ENCODE measurements at regions of chr15 and their contacts with region 1.

Region 1: GRCh38 chr15:68817304-68818065 is 3.2 kb downstream of the ANP32A start:
- DNase-seq: peak; percentile 76
- H3K4me3 ChIP-seq: peak overlapping the region; percentile 89 to 92
- H3K27ac ChIP-seq: peak overlapping the region; percentile 87 to 98
- H3K4me1 ChIP-seq: peaks cover 10 to 36% of the 10 kb centered on the region in 2 experiments; a peak in 3 of 4 replicates
- H3K27me3 ChIP-seq: no peaks in the 10 kb centered on the region
- CTCF ChIP-seq: no peak
- EP300 ChIP-seq: no peak
- RAD21 ChIP-seq: no peak

Region 2: GRCh38 chr15:68806220-68807060 is 11.0 kb before region 1 on chr15:
- CTCF ChIA-PET with region 1: interaction called, 12 read pairs
- POLR2A ChIA-PET with region 1: interaction called, 4 read pairs
- DNase-seq: peak; percentile 43
- H3K4me3 ChIP-seq: no peak overlapping the region
- H3K27ac ChIP-seq: peak overlapping the region in 1 of 2 experiments; percentile 54; a peak in 1 of 4 replicates
- H3K4me1 ChIP-seq: peaks cover 0 to 52% of the 10 kb centered on the region in 2 experiments; a peak in 1 of 4 replicates
- H3K27me3 ChIP-seq: no peaks in the 10 kb centered on the region
- CTCF ChIP-seq: no peak
- EP300 ChIP-seq: no peak
- RAD21 ChIP-seq: 0 out of 2 replicates have a peak, but pooled peaks have one; percentile 1

Measured in SK-N-SH (cell line).